Left lung (tissue), 14 donors: ENCODE measurements at regions of chr15 and their contacts with region 1.

Region 1: DNA sequence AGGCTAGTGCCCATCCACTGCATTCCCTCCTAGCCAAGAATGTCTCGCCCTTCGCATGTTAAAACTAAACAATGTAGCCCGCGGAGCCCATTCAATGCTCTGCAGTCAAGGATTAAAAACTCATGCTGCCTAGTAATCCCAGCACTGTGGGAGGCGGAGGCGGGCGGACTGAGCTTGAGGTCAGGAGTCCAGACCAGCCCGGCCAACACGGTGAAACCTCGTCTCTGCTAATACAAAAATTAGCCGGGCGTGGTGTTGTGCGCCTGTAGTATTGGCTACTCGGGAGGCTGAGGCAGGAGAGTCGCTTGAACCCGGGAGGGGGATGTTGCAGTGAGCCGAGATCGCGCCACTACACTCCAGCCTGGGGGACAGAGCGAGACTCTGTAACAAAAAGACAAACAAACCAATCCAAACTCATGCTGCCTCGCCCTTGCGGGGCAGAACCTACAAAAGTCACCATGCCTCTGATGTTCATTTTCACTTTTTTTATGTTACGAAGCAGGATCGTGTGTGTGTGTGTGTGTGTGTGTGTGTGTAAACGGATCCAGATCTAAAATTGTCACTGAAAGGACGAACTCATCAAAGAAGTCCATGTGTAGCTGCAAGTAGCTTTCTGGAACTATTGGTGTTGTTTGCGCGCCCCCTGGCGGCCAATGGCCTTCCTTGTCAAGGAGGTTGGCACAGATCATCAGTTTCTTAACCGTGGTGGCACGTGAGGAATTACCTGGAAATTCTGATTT is 54.8 kb upstream of the SPESP1 start:
- DNase-seq: peak; percentile 88 to 99 (median 93)
- ATAC-seq: peak; percentile 98
- H3K4me3 ChIP-seq: peak overlapping the region in 1 of 2 donors; percentile 22
- H3K27ac ChIP-seq: no peak overlapping the region
- H3K4me1 ChIP-seq: peaks cover 4 to 7% of the 10 kb centered on the region in 2 donors
- H3K27me3 ChIP-seq: peaks cover 0 to 9% of the 10 kb centered on the region in 2 donors
- CTCF ChIP-seq: peak; percentile 80 to 88

Region 2: GRCh38 chr15:68550481-68551295 is 324.9 kb before region 1 on chr15:
- intact Hi-C with region 1: loop called (anchors 5 kb)
- DNase-seq: peak; percentile 33 to 76 (median 70)
- ATAC-seq: peak; percentile 83
- H3K4me3 ChIP-seq: no peak overlapping the region
- H3K27ac ChIP-seq: no peak overlapping the region
- H3K4me1 ChIP-seq: no peaks in the 10 kb centered on the region
- H3K27me3 ChIP-seq: peaks cover 0 to 10% of the 10 kb centered on the region in 2 donors
- CTCF ChIP-seq: peak; percentile 92 to 94

Region 3: GRCh38 chr15:68559345-68560310 is 315.9 kb before region 1 on chr15:
- intact Hi-C with region 1: loop called (anchors 5 kb)
- DNase-seq: peak; percentile 78 to 98 (median 87)
- ATAC-seq: peak; percentile 99
- H3K4me3 ChIP-seq: peak overlapping the region; percentile 16 to 35
- H3K27ac ChIP-seq: no peak overlapping the region
- H3K4me1 ChIP-seq: peaks cover 8 to 17% of the 10 kb centered on the region in 2 donors
- H3K27me3 ChIP-seq: peaks cover 0 to 44% of the 10 kb centered on the region in 2 donors
- CTCF ChIP-seq: peak; percentile 96 to 97

Region 4: DNA sequence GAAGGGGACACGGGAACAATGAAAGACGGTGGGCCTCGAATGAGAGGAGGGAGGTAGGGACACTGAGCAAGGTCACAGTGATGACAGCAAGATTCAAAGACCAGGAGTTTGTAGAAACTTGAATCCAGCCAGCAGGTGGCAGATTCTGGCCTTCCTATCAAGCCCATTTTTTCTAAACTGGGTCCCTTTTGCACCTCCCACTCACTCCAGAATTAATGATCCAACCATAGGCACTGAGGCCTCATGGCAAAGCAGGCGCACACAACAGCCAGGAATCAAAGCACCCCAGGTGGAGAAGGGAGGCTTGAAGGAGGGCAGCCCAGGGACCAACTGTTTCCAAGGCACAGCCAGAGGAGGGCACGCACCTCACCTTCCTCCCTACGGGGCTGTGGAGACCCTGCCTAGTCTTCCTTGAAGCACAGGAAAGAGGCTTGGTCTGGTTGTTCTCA is 145.1 kb before region 1 on chr15:
- intact Hi-C with region 1: loop called in 1 of 2 experiments (anchors 10 kb)
- DNase-seq: peak in 2 of 4 donors; percentile 36 to 55
- ATAC-seq: peak; percentile 68
- H3K4me3 ChIP-seq: no peak overlapping the region
- H3K27ac ChIP-seq: no peak overlapping the region
- H3K4me1 ChIP-seq: peaks cover 0 to 17% of the 10 kb centered on the region in 2 donors
- H3K27me3 ChIP-seq: no peaks in the 10 kb centered on the region
- CTCF ChIP-seq: peak; percentile 38 to 56

Region 5: GRCh38 chr15:68924866-68925560 is 49.5 kb after region 1 on chr15:
- intact Hi-C with region 1: no loop called
- DNase-seq: peak in 3 of 4 donors; percentile 61 to 87 (median 75)
- ATAC-seq: peak; percentile 96
- H3K4me3 ChIP-seq: no peak overlapping the region
- H3K27ac ChIP-seq: no peak overlapping the region
- H3K4me1 ChIP-seq: no peaks in the 10 kb centered on the region
- H3K27me3 ChIP-seq: peaks cover 0 to 4% of the 10 kb centered on the region in 2 donors
- CTCF ChIP-seq: peak; percentile 68 to 75